CD8-positive, alpha-beta T cell (primary cell): ENCODE measurements at regions of chr15 and their contacts with region 1.

Region 1: DNA sequence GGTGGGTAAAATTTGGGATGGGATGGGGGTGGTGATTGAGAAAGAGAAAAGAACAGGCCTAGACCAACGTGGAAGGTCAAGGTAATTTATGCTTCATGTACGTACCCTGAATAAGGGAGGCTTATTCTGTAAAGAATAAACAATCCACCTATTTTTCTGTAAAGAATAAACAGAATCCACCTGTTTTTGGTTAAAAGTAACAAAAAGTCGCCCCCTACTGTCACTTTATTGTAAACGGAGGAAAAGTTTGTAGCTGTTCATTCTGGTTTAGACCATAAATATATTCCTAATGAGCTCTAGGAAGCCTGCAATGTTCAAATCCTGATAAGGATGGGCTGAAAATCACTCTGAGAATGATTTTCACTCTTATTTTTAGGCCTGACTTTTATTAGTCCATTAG is 23.5 kb upstream of the SQOR start:
- DNase-seq: peak in 2 of 9 experiments; percentile 25 to 37
- ATAC-seq: no peak
- H3K4me3 ChIP-seq: no peak overlapping the region
- H3K4me3 Mint-ChIP-seq: no peak overlapping the region
- H3K27ac ChIP-seq: no peak overlapping the region
- H3K27ac Mint-ChIP-seq: peak overlapping the region; percentile 38
- H3K4me1 ChIP-seq: no peaks in the 10 kb centered on the region
- H3K4me1 Mint-ChIP-seq: peaks cover 3% of the 10 kb centered on the region
- H3K27me3 ChIP-seq: no peaks in the 10 kb centered on the region
- H3K27me3 Mint-ChIP-seq: no peaks in the 10 kb centered on the region
- CTCF ChIP-seq: peak; percentile 62

Region 2: DNA sequence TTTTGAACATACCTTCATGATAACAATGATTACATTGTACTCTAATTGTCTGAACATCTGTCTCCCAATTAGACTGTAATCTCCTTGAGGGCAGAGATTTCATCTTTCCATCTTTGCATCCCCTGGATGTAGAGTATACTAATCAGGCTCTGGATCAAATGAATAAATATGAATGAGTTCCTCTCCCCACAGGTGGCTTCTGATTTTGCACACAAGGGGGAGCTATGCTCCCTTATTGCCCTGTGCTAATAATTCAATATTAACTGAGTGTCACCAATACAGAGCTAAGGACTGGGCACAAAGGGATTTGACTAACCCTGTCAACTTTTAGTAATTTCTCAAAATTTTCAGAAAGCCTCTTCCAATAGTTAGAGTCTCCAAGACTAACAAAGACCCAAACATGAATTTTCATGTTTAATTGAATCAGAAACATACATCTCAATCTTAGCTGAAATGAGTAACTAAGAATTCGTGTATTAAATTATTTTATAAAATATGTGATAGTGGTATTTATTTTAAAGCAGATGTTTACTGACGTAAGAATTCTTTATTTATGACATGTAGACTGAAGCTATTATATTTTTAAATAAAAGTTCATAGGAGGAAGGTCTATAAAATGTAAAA is 484.7 kb before region 1 on chr15:
- CTCF ChIA-PET with region 1: no interaction called
- POLR2A ChIA-PET with region 1: no interaction called
- intact Hi-C with region 1: loop called in 1 of 2 experiments (anchors 10 kb)
- DNase-seq: peak in 5 of 9 experiments; percentile 36 to 68 (median 52)
- ATAC-seq: peak; percentile 60
- H3K4me3 ChIP-seq: no peak overlapping the region
- H3K4me3 Mint-ChIP-seq: no peak overlapping the region
- H3K27ac ChIP-seq: no peak overlapping the region
- H3K27ac Mint-ChIP-seq: no peak overlapping the region
- H3K4me1 ChIP-seq: no peaks in the 10 kb centered on the region
- H3K4me1 Mint-ChIP-seq: peaks cover 5% of the 10 kb centered on the region
- H3K27me3 ChIP-seq: peaks cover 9 to 28% of the 10 kb centered on the region in 2 experiments
- H3K27me3 Mint-ChIP-seq: peaks cover 64% of the 10 kb centered on the region
- CTCF ChIP-seq: peak; percentile 59

Region 3: GRCh38 chr15:45424429-45424828 is 186.9 kb before region 1 on chr15:
- CTCF ChIA-PET with region 1: interaction called, 39 read pairs
- POLR2A ChIA-PET with region 1: no interaction called
- intact Hi-C with region 1: loop called in 1 of 2 experiments (anchors 1 kb)
- DNase-seq: no peak
- ATAC-seq: no peak
- H3K4me3 ChIP-seq: no peak overlapping the region
- H3K4me3 Mint-ChIP-seq: no peak overlapping the region
- H3K27ac ChIP-seq: no peak overlapping the region
- H3K27ac Mint-ChIP-seq: no peak overlapping the region
- H3K4me1 ChIP-seq: no peaks in the 10 kb centered on the region
- H3K4me1 Mint-ChIP-seq: no peaks in the 10 kb centered on the region
- H3K27me3 ChIP-seq: no peaks in the 10 kb centered on the region
- H3K27me3 Mint-ChIP-seq: no peaks in the 10 kb centered on the region
- CTCF ChIP-seq: no peak

Region 4: GRCh38 chr15:45429974-45430792 is 181.1 kb before region 1 on chr15:
- CTCF ChIA-PET with region 1: interaction called, 39 read pairs
- POLR2A ChIA-PET with region 1: no interaction called
- intact Hi-C with region 1: loop called (anchors 1 to 2 kb)
- DNase-seq: peak; percentile 72 to 93 (median 87)
- ATAC-seq: peak; percentile 95
- H3K4me3 ChIP-seq: peak overlapping the region; percentile 43 to 45
- H3K4me3 Mint-ChIP-seq: peak overlapping the region; percentile 61
- H3K27ac ChIP-seq: no peak overlapping the region
- H3K27ac Mint-ChIP-seq: no peak overlapping the region
- H3K4me1 ChIP-seq: peaks cover 7% of the 10 kb centered on the region
- H3K4me1 Mint-ChIP-seq: peaks cover 3% of the 10 kb centered on the region
- H3K27me3 ChIP-seq: peaks cover 0 to 2% of the 10 kb centered on the region in 2 experiments
- H3K27me3 Mint-ChIP-seq: no peaks in the 10 kb centered on the region
- CTCF ChIP-seq: peak; percentile 100

Region 5: DNA sequence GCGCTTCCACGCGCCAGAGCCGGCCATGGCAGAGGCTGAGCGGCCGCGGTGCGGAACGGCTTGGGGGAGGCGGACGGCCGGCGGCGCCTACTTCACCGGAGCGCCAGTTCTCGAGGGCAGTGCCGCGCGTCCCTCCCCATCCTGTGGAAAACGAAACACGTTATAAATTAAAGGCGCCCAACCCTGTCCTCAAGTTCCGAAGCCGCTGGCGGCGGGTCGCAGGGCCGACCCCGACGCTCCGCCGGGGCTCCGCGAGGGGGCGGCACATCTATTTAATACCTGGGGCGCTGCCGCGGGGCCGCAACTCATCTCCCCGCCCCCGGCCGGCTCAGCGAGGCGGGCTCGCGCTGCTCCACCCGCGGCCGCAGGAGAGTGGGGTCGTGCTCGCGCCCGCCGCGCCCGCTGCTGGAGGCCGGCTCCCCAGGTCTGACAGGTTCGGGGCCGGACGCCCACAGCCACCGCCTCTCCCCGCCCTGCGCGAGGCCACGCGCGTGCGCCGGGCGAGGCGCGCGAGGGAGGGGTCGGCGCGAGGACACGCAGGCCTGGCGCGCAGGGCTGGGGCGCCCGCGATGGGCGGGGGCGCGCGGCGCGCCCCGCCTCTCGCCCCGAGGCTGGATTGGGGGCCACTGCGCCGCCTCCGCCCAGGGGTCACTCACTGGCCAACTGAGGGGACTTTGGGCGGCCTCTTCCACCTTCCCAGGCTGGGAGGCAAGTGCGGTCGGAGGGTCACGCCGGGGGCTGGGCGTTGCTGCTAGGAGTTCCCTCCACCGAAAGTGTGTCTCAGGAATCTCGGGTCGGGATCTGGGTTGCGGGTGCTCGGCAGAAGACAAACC is 88.8 kb before region 1 on chr15 and contains the start of gene SLC30A4:
- CTCF ChIA-PET with region 1: interaction called, 4 read pairs
- POLR2A ChIA-PET with region 1: no interaction called
- intact Hi-C with region 1: loop called (anchors 1 kb)
- DNase-seq: peak; percentile 16 to 87 (median 66)
- ATAC-seq: peak; percentile 85
- H3K4me3 ChIP-seq: peak within 1 kb of the TSS; percentile 71 to 85
- H3K4me3 Mint-ChIP-seq: peak within 1 kb of the TSS; percentile 94
- H3K27ac ChIP-seq: peak within 1 kb of the TSS; percentile 31 to 63
- H3K27ac Mint-ChIP-seq: peak within 1 kb of the TSS; percentile 88
- H3K4me1 ChIP-seq: peaks cover 10% of the 10 kb centered on the region
- H3K4me1 Mint-ChIP-seq: peaks cover 32% of the 10 kb centered on the region
- H3K27me3 ChIP-seq: no peaks in the 10 kb centered on the region
- H3K27me3 Mint-ChIP-seq: no peaks in the 10 kb centered on the region
- CTCF ChIP-seq: peak; percentile 67
- total RNA-seq, gene SLC30A4: 1.8 to 2.0 TPM

Region 6: DNA sequence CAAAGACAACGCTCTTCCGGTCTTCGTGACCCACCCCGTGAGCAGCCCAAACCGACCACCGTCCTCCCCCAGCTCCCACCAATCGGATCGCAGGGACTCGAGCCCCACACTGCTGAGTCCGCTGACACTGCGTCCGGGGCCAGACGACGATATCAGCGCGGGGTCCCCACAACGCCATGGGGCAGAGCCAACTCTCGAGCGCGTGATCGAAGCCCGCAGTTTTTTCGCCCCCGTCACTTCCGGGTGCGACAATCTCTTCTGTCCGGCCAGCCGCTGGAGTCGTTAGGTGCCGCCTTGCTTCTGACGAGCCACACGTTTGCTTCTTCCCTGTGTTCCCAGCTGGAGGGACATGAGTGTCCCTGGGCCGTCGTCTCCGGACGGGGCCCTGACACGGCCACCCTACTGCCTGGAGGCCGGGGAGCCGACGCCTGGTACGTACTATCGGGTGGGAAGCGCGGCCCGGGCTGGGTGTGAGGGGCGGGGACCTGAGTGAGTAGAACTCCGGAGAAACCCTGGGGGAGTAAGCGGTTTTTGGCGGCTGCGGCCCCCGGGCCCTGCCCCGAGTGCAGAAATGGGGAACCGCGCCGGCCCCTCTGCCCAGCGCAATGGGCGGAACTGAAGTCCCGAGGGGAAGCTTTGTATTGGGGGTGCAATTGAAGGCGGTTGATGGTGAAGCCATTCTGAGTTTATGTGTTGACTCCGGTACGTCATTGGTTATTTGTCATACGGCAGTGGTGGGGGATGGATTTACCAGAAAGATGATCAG is 24.0 kb before region 1 on chr15 and contains the start of gene BLOC1S6:
- CTCF ChIA-PET with region 1: interaction called, 10 read pairs
- POLR2A ChIA-PET with region 1: interaction called, 6 read pairs
- intact Hi-C with region 1: loop called in 1 of 2 experiments (anchors 2 kb)
- DNase-seq: peak; percentile 83 to 95 (median 90)
- ATAC-seq: peak; percentile 77
- H3K4me3 ChIP-seq: peak within 1 kb of the TSS; percentile 82 to 86
- H3K4me3 Mint-ChIP-seq: peak within 1 kb of the TSS; percentile 100
- H3K27ac ChIP-seq: peak within 1 kb of the TSS; percentile 93 to 98
- H3K27ac Mint-ChIP-seq: peak within 1 kb of the TSS; percentile 100
- H3K4me1 ChIP-seq: peaks cover 32% of the 10 kb centered on the region
- H3K4me1 Mint-ChIP-seq: peaks cover 50% of the 10 kb centered on the region
- H3K27me3 ChIP-seq: no peaks in the 10 kb centered on the region
- H3K27me3 Mint-ChIP-seq: no peaks in the 10 kb centered on the region
- CTCF ChIP-seq: no peak
- total RNA-seq, gene BLOC1S6: 78.1 to 78.9 TPM

Region 7: DNA sequence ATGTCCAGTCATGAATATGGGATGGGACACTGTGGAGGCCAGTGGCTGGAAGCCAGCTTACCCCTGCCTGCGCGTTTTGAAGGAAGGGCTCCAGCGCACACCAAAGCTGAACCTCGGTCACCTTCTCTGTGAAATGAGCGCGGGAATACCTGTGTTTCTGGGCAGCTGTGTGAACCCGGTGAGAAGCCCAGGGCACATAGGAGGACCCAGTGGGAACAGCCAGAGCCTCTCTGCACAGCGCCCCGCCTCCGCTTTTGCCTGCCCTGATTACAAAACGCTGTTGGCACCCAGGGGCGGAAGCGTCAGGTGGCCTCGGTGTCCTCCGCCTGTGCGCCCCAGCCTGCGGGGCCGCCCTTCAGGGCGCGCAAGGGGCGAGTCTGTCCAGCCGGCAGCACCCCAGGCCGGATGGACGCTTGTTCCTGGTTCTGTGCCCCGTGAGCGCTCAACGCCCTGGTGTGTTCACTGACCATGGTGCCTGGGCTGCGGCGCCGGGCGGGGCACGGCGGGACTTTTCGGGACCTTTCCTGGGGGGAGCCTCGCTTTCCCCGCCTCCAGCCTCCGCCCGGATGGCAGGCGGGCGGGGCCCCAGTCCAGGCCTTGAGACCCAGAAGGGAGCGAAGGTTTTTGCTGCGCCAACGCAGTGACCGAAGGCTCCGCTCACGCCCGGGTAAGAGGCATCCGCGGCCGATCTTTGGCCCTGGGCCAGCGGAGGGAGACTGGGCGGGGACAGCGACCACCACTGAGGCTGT is 23.3 kb after region 1 on chr15 and contains the start of gene SQOR:
- CTCF ChIA-PET with region 1: interaction called, 10 read pairs
- POLR2A ChIA-PET with region 1: interaction called, 3 read pairs
- intact Hi-C with region 1: no loop called
- DNase-seq: peak; percentile 25 to 83 (median 67)
- ATAC-seq: peak; percentile 57
- H3K4me3 ChIP-seq: peak within 1 kb of the TSS; percentile 67 to 96
- H3K4me3 Mint-ChIP-seq: peak within 1 kb of the TSS; percentile 97
- H3K27ac ChIP-seq: peak within 1 kb of the TSS; percentile 72 to 78
- H3K27ac Mint-ChIP-seq: peak within 1 kb of the TSS; percentile 94
- H3K4me1 ChIP-seq: peaks cover 34% of the 10 kb centered on the region
- H3K4me1 Mint-ChIP-seq: peaks cover 43% of the 10 kb centered on the region
- H3K27me3 ChIP-seq: no peaks in the 10 kb centered on the region
- H3K27me3 Mint-ChIP-seq: no peaks in the 10 kb centered on the region
- CTCF ChIP-seq: no peak
- total RNA-seq, gene SQOR: 11.8 to 14.4 TPM